Caco-2 (cell line): ENCODE measurements at regions of chr16 and their contacts with region 1.

Region 1: DNA sequence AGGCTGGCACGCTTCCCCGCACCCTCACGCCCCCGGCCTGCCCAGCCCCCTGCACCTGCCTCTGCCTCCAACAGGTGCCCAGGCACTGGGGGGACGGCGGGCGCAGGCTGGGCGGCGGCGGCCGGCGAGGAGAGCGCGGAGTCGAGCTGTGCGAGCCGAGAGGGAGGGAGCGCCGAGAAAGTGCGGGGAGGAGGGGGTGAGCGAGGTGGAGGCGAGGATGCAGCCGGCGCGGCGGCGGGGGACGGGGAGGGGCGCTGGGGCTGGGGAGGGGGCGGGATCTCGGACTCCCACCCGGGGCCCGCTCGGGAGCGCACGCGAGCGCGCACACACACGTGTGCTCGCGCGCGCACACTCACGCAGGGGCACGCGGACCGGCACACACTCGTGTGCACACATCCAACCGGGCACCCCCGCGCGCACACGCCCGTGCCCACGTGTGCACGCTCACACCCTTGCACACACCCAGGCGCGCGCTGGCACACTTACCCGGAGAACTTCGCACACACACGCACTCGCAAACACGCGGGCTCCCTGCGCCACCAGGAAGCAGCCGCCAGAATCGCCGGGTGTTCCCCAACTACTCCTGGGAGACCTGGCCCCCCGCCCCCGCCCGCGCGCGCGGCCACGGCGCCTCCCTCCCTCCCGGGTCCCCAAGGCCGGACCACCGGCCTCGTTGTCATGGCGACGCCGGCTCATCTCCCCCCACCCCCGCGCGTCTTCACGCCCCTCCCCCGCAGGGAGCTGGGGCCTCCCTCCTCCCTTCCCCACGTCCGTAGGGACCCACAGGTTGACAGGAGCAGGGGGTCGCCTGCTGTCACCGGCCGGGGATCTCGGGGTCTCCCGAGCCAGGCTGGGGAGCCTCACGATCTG is at the start of gene DOC2A:
- DNase-seq: peak in 1 of 2 experiments; percentile 32
- H3K4me3 ChIP-seq: peak within 1 kb of the TSS; percentile 83
- H3K4me3 Mint-ChIP-seq: peak within 1 kb of the TSS; percentile 68
- H3K27ac Mint-ChIP-seq: no peak within 1 kb of the TSS
- H3K4me1 ChIP-seq: no peaks in the 10 kb centered on the region
- H3K4me1 Mint-ChIP-seq: no peaks in the 10 kb centered on the region
- H3K27me3 ChIP-seq: no peaks in the 10 kb centered on the region
- H3K27me3 Mint-ChIP-seq: no peaks in the 10 kb centered on the region
- CTCF ChIP-seq: no peak
- total RNA-seq, gene DOC2A: 3.5 and 4.5 TPM in 2 replicates

Region 2: GRCh38 chr16:29995911-29996772 is 14.9 kb before region 1 on chr16 and contains the start of gene INO80E:
- CTCF ChIA-PET with region 1: no interaction called
- POLR2A ChIA-PET with region 1: interaction called, 10 read pairs
- intact Hi-C with region 1: no loop called
- DNase-seq: peak; percentile 97 to 98
- H3K4me3 ChIP-seq: peak within 1 kb of the TSS; percentile 68
- H3K4me3 Mint-ChIP-seq: peak within 1 kb of the TSS; percentile 99
- H3K27ac Mint-ChIP-seq: peak within 1 kb of the TSS; percentile 65
- H3K4me1 ChIP-seq: peaks cover 11% of the 10 kb centered on the region; the same call in 1 of the 2 replicates
- H3K4me1 Mint-ChIP-seq: peaks cover 12% of the 10 kb centered on the region
- H3K27me3 ChIP-seq: no peaks in the 10 kb centered on the region
- H3K27me3 Mint-ChIP-seq: no peaks in the 10 kb centered on the region
- CTCF ChIP-seq: no peak
- total RNA-seq, gene INO80E: 58.6 and 58.8 TPM in 2 replicates